ENCODE measurements at regions of chr7 and their contacts with region 1.

Region 1: DNA sequence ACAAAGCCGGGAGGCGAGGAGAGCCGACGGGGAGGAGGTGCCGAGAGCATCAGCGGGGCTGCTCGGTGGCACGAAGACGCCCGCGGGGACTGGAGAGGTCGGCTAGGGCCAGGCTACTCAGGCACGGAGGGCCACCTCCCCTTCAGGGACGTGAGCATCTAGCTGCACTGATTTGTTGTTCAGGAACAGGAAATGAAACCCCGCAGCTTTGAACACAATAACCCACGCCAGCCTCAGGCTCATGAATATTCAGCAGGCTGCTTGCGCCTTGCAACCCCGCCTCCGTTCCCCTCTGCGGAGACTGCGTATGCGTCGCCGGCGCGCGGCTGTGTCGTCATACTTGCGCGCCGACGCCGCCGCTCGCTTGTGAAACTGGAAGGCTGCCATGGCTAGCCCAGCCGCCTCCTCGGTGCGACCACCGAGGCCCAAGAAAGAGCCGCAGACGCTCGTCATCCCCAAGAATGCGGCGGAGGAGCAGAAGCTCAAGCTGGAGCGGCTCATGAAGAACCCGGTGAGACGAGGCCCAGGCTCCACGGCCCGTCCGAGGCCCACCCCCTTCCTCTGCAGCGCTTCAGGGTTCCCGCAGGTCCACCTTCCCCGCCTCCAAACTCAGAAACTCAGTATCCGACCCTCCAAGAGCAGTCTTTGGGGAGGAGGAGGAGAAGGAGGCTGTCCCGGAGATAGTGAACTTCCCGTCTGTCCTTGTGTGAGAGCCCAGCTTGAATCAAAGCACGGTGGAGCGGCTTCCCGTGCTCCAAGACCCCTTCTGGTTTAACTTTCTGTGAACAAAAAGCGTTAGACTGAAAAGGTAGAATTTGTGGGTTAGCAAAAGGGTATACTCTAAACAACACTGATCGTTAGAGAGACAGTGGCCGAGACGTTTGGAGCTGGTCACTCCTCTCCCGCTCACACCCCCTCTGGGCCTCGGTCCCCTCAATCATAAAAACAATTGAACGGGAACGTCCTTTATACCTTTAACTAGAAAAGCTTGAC is at the start of gene PRKRIP1:
- DNase-seq: peak; percentile 96 to 99 (median 99)
- H3K4me3 ChIP-seq: peak within 1 kb of the TSS; percentile 88 to 99 (median 89)
- H3K4me3 Mint-ChIP-seq: peak within 1 kb of the TSS; percentile 92 to 95
- H3K27ac ChIP-seq: peak within 1 kb of the TSS; percentile 71 to 98
- H3K27ac Mint-ChIP-seq: peak within 1 kb of the TSS; percentile 93 to 98 (median 95)
- H3K4me1 ChIP-seq: peaks cover 17 to 18% of the 10 kb centered on the region in 2 donors
- H3K4me1 Mint-ChIP-seq: peaks cover 20% of the 10 kb centered on the region
- H3K27me3 ChIP-seq: no peaks in the 10 kb centered on the region
- H3K27me3 Mint-ChIP-seq: peaks cover 0 to 2% (median 1%) of the 10 kb centered on the region in 3 donors
- CTCF ChIP-seq: no peak
- polyA plus RNA-seq, gene PRKRIP1: 6.6 to 27.0 (median 7.4) TPM

Region 2: GRCh38 chr7:101542527-101543241 is 853.6 kb before region 1 on chr7:
- intact Hi-C with region 1: loop called in 1 of 2 experiments (anchors 10 kb)
- DNase-seq: peak; percentile 25 to 43 (median 40)
- H3K4me3 ChIP-seq: no peak overlapping the region
- H3K4me3 Mint-ChIP-seq: no peak overlapping the region
- H3K27ac ChIP-seq: no peak overlapping the region
- H3K27ac Mint-ChIP-seq: no peak overlapping the region
- H3K4me1 ChIP-seq: no peaks in the 10 kb centered on the region
- H3K4me1 Mint-ChIP-seq: no peaks in the 10 kb centered on the region
- H3K27me3 ChIP-seq: no peaks in the 10 kb centered on the region
- H3K27me3 Mint-ChIP-seq: peaks cover 0 to 5% (median 3%) of the 10 kb centered on the region in 3 donors
- CTCF ChIP-seq: peak; percentile 95

Region 3: DNA sequence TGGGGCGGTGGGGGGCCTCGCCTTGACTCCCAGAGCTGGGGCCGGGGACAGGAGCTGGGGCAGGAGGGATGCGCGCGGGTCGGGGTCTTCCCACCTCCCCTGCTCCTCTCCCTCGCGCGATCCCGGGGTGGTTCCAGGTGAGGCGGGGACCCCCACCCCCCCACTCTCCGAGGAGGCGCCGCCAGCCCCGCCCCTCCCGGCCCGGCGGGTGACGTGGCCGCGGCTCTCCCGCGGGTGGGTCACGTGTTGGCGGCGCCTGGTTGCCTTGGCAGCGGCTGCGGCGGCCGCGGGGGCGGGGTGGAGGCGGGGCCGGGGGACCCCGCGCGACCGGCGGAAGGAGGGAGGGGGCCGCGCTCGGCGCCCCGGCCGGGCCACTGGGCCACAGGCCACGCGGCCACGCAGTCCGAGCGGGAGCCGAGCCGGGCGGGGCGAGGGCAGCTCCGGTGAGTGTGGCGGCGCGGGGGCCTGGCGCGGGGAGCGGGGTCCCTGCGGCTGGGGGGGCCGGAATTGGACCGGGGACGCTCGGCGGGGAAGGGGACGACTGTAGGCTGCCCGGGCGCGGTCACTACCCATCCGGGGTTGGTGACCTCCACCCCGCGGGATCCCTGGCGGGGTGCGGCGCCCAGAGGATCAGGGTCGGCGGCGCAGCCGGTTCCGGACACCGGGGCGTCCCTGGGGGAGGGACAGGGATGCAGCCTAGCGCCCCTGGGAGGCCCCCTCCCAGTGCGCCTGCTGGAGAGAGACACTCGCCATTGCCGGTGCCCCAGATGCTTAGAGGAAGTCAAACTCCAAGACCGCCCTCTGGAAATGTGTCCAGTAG is 37.1 kb after region 1 on chr7 and contains the start of gene ORAI2:
- intact Hi-C with region 1: loop called in 1 of 2 experiments (anchors 5 kb)
- DNase-seq: peak; percentile 68 to 80 (median 76)
- H3K4me3 ChIP-seq: peak within 1 kb of the TSS; percentile 64 to 88 (median 69)
- H3K4me3 Mint-ChIP-seq: peak within 1 kb of the TSS; percentile 83 to 92
- H3K27ac ChIP-seq: peak within 1 kb of the TSS; percentile 63 to 100
- H3K27ac Mint-ChIP-seq: peak within 1 kb of the TSS; percentile 66 to 98 (median 96)
- H3K4me1 ChIP-seq: peaks cover 56 to 63% of the 10 kb centered on the region in 2 donors
- H3K4me1 Mint-ChIP-seq: peaks cover 60% of the 10 kb centered on the region
- H3K27me3 ChIP-seq: no peaks in the 10 kb centered on the region
- H3K27me3 Mint-ChIP-seq: peaks cover 0 to 2% (median 1%) of the 10 kb centered on the region in 3 donors
- CTCF ChIP-seq: no peak
- polyA plus RNA-seq, gene ORAI2: 27.5 to 50.0 (median 38.2) TPM